GM12878 (cell line): ENCODE measurements at regions of chr20 and their contacts with region 1.

Region 1: DNA sequence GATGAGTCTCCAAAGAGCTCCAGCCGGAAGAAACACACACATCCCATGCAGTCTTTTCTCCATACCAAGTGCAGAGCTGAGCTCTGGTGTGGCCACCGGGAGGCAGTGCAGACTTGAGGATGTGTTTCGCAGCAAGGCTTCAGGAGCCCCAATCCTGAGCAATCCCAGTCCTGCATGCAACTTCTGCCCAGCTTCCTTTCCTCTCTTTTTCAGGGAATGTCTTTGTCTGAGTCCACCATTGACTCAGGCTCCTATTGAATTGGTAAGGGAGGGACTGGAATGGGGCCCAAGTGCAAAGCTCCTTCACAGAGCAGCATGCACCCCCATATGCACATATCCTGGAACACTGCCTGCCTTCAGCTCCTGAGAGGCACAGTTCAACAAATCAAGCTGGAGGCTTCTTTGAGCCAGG is 50.5 kb upstream of the ASIP start:
- DNase-seq: no peak
- ATAC-seq: peak; percentile 80
- H3K4me3 ChIP-seq: no peak overlapping the region
- H3K27ac ChIP-seq: no peak overlapping the region
- H3K4me1 ChIP-seq: no peaks in the 10 kb centered on the region
- H3K27me3 ChIP-seq: peaks cover 0 to 5% of the 10 kb centered on the region in 2 experiments; a peak in 3 of 4 replicates
- CTCF ChIP-seq: peak; percentile 63 to 82 (median 75); a peak in 5 of 6 replicates
- EP300 ChIP-seq: no peak
- POLR2A ChIP-seq: no peak
- RAD21 ChIP-seq: peak; percentile 89

Region 2: GRCh38 chr20:34232494-34233087 is 41.9 kb after region 1 on chr20:
- CTCF ChIA-PET with region 1: no interaction called
- POLR2A ChIA-PET with region 1: no interaction called
- RAD21 ChIA-PET with region 1: no interaction called
- SMC1A ChIA-PET with region 1: no interaction called
- in situ Hi-C with region 1: no loop called
- intact Hi-C with region 1: no loop called
- DNase-seq: no peak
- ATAC-seq: no peak
- H3K4me3 ChIP-seq: no peak overlapping the region
- H3K27ac ChIP-seq: no peak overlapping the region
- H3K4me1 ChIP-seq: no peaks in the 10 kb centered on the region
- H3K27me3 ChIP-seq: no peaks in the 10 kb centered on the region
- CTCF ChIP-seq: no peak
- EP300 ChIP-seq: no peak
- POLR2A ChIP-seq: no peak
- RAD21 ChIP-seq: no peak

Region 3: GRCh38 chr20:34254979-34255378 is 64.3 kb after region 1 on chr20:
- CTCF ChIA-PET with region 1: interaction called, 10 read pairs
- POLR2A ChIA-PET with region 1: no interaction called
- RAD21 ChIA-PET with region 1: no interaction called
- SMC1A ChIA-PET with region 1: no interaction called
- in situ Hi-C with region 1: no loop called
- intact Hi-C with region 1: no loop called
- DNase-seq: no peak
- ATAC-seq: no peak
- H3K4me3 ChIP-seq: no peak overlapping the region
- H3K27ac ChIP-seq: no peak overlapping the region
- H3K4me1 ChIP-seq: no peaks in the 10 kb centered on the region
- H3K27me3 ChIP-seq: no peaks in the 10 kb centered on the region
- CTCF ChIP-seq: no peak
- EP300 ChIP-seq: no peak
- POLR2A ChIP-seq: no peak
- RAD21 ChIP-seq: no peak

Region 4: DNA sequence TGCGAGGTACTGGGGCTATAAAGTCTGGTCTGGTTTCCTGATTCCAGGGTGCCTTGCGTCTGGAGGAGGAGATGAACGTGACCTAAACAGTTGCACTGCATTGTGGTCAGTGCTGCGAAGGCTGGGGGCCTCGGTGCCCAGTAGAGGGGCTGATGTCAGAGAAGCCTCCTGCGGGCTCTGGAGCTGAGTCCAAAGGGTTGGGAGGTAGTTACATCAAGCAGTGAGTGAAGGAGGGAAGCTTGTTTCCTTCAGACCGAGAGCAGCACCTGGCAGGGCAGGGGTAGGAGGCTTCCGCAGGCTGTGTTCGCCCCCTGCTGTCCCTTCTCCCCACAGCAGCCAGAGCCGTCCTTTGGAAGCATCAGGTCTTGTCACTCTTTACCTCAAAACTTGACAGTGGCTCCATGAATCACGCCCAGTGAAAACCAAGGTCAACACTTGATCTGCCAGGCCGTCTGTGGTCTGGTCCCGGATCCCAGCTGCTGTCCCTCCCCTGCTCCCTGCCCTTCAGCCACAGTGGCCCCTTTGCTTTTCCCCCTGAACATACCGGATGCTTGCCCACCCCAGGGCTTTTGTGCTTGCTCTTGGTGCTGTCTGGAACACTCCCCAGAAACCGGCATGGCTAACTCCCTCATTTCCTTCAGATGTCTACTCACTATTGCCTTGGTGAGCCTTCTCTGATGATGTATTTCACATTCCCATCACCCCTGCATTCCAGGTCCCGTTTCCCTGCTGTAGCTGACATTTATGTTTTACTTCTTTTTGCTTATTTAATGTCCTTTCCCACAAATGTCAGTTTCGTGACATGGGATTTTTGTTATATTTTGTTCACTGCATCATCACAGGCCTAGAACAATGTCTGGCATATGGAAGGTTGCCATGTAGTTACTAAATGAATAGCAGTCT is 332.5 kb after region 1 on chr20:
- CTCF ChIA-PET with region 1: interaction called, 6 read pairs
- POLR2A ChIA-PET with region 1: no interaction called
- RAD21 ChIA-PET with region 1: interaction called, 3 read pairs
- SMC1A ChIA-PET with region 1: no interaction called
- in situ Hi-C with region 1: no loop called
- intact Hi-C with region 1: loop called (anchors 10 kb)
- DNase-seq: no peak
- ATAC-seq: peak; percentile 91
- H3K4me3 ChIP-seq: no peak overlapping the region
- H3K27ac ChIP-seq: no peak overlapping the region
- H3K4me1 ChIP-seq: peaks cover 11% of the 10 kb centered on the region
- H3K27me3 ChIP-seq: no peaks in the 10 kb centered on the region
- CTCF ChIP-seq: peak; percentile 63 to 75 (median 66)
- EP300 ChIP-seq: no peak
- POLR2A ChIP-seq: no peak
- RAD21 ChIP-seq: peak; percentile 69